Posterior vena cava (tissue), 2 donors: ENCODE measurements at regions of chr2 and their contacts with region 1.

Region 1: DNA sequence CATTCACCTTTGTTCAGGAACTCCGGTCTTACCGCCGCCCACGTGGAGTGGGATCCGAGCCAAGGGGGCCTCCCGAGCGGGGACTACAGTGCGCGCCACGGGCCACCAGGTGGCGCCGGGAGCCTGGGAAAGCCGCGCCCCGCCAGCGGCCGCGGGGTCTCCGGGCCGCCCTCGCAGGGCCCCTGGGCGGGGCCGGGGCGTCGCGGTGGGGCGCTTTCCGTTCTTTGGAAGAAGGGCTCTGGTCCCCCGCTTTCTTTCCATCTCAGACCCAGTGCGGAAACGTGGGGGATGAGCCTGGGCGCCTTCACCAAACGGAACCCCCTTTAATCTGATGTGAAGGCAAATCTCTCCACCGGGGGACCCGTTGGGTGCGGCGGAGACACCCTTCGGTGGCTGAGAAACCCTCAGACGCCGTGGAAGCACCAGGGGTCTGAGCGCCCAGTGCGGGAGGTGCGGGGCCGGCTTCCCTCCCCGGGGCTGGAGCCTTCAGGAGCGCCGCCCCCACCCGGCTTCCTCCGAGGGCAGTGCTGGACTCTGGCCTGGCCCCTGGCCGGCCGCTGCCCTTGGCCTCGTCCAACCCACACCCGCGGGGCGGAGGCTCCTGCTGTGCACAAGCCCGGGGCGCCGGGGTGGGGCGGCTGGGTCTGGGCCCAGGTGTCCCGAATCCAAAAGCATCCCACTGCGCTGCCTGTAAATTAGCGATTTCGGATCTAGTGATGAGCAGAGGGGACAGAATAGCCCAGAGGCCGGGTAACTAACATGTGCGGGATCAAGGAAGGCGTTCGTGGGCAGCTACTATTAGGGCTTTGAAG is 44.6 kb downstream of the GORASP2 start:
- DNase-seq: peak; percentile 95

Region 2: GRCh38 chr2:170576296-170576695 is 397.4 kb before region 1 on chr2:
- intact Hi-C with region 1: no loop called
- DNase-seq: no peak

Region 3: DNA sequence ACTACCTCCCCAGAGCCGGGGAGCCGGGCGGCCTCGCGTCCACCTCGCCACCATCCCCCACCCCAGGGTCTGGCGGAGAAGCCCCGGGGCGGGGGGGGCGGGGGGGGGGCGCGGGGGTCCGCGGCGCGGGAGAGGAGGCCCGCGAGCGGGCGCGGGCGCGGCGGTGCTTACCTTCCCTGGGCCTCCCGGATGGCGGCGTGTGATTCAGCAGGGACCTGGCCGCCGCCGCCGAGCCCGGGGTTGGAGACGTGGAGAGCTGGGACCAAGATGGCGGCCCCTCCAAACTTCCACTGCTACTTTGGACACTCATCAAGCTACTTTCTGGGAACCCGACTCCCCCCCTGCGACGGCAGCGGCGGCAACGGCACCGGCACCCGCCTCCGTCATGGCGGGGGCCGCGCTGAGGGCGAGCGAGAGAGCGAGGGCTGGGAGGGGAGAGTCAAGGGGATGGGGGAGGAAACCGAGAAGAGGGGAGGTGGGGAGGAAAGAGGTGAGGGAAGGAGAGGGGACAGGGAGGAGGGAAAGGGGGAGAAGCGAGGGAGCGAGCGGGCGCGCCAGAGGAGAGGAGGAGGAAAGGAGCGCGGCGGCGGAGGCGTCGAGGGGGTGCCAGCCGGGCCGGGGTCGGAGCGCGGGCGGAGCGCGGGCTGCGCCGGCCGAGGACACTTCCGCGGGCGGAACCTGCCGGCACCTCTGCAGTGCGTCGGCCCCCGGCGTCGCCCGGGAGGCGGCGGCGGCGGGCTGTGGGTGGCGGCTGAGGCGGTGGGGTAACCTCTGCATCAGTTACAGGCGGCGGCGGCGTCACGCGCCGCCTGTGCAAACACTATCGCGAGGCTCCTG is 186.6 kb after region 1 on chr2 and contains the start of gene TLK1:
- intact Hi-C with region 1: loop called in 1 of 2 experiments (anchors 5 kb)
- DNase-seq: peak; percentile 93
- total RNA-seq, gene TLK1: 48.6 to 55.3 TPM

Region 4: GRCh38 chr2:171416009-171416926 is 442.6 kb after region 1 on chr2:
- intact Hi-C with region 1: loop called in 1 of 2 experiments (anchors 5 kb)
- DNase-seq: peak; percentile 92

Region 5: GRCh38 chr2:171433763-171434670 is 460.3 kb after region 1 on chr2 and contains the starts of genes DCAF17 and METTL8:
- intact Hi-C with region 1: loop called in 1 of 2 experiments (anchors 10 kb)
- DNase-seq: peak; percentile 99
- total RNA-seq, gene DCAF17: 19.2 TPM
- total RNA-seq, gene METTL8: 19.8 to 27.2 TPM